Naive thymus-derived CD8-positive, alpha-beta T cell (primary cell): ENCODE measurements at regions of chr16 and their contacts with region 1.

Region 1: DNA sequence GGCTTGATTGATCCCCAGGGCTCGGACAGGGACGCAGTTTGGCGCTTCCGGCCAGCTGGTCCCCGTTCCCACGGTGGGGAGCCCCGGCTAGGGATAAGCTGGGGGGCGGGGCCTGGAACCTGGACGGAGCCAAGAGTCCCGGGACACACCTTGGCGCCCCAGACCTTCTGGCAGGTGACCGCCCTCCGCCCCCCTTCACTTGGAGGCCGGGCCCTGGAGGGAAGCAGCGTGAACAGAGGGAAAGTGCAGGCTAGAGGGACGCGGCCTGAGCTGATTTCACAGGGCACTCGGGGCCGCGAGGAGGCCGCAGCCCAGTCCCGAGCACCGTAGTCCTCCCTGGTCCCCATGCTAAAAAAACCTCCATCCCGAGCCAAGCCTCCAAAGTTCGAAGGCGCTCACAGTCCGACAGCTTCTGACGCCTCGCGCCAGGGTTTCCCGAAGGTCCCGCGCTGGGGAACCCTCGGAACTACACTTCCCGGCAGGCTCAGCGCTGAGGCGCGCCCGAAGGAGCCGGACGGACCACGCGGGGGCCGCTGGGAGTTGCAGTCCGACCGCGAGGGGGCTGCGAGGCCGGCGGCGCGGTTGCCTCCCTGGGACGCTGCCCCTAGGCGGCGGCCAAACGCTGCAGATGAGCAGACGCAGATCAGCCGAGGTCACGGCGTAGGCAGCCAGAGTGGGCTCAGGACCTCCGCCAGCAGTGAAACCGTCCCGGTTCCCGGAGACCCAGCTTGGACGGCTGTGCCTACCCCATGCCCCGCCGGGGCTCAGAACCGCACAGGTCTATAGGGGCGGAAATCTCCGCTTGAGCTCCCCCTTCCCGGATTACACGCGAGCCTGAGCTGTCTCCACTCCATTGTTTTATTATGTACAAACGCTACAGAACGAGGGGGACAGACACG is at the start of gene TBX6:
- DNase-seq: peak; percentile 86 to 93 (median 92)
- ATAC-seq: peak; percentile 77 to 81
- H3K4me3 Mint-ChIP-seq: peak within 1 kb of the TSS; percentile 80 to 93 (median 91)
- H3K27ac Mint-ChIP-seq: peak within 1 kb of the TSS; percentile 88 to 98 (median 94)
- H3K4me1 Mint-ChIP-seq: peaks cover 30 to 63% (median 57%) of the 10 kb centered on the region in 4 donors
- H3K27me3 Mint-ChIP-seq: no peaks in the 10 kb centered on the region
- polyA plus RNA-seq, gene TBX6: 0.15 to 0.25 (median 0.25) TPM

Region 2: DNA sequence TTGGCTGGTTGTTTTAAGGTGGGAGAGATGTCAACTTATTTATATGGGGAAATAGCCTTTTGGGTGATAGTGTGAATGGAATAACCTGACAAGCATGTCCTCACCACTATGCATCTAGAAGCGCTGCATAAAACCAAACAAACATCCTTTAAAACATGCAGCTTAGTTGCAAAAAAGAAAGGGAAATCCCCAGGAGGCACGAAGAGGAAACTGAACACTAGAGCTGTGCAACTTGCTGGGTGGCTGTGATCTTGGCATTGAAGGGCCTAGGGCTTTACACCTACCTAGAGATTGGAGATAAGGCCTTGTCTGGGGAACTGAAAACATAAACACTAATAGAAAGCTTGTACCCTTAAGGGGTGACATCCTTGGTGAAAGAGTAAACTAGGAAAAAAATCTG is 353.2 kb before region 1 on chr16:
- POLR2A ChIA-PET with region 1: interaction called, 10 read pairs
- DNase-seq: peak; percentile 25 to 83 (median 72)
- ATAC-seq: peak; percentile 79 to 86
- H3K4me3 Mint-ChIP-seq: peak overlapping the region; percentile 36 to 80 (median 66)
- H3K27ac Mint-ChIP-seq: peak overlapping the region; percentile 82 to 100 (median 95)
- H3K4me1 Mint-ChIP-seq: peaks cover 58 to 88% (median 85%) of the 10 kb centered on the region in 4 donors
- H3K27me3 Mint-ChIP-seq: no peaks in the 10 kb centered on the region

Region 3: GRCh38 chr16:30010844-30011713 is 80.6 kb before region 1 on chr16 and contains the start of gene DOC2A:
- POLR2A ChIA-PET with region 1: no interaction called
- DNase-seq: peak in 4 of 10 donors; percentile 27 to 38 (median 34)
- ATAC-seq: peak; percentile 77 to 78
- H3K4me3 Mint-ChIP-seq: peak within 1 kb of the TSS; percentile 73 to 91 (median 86)
- H3K27ac Mint-ChIP-seq: peak within 1 kb of the TSS in 3 of 10 donors; percentile 62 to 85 (median 67)
- H3K4me1 Mint-ChIP-seq: peaks cover 5 to 16% (median 12%) of the 10 kb centered on the region in 4 donors
- H3K27me3 Mint-ChIP-seq: peaks cover 2 to 23% (median 10%) of the 10 kb centered on the region in 5 donors
- polyA plus RNA-seq, gene DOC2A: not detected

Region 4: GRCh38 chr16:30075507-30076275 is 16.0 kb before region 1 on chr16 and contains the start of gene PPP4C:
- POLR2A ChIA-PET with region 1: interaction called, 127 read pairs
- DNase-seq: peak; percentile 83 to 93 (median 89)
- ATAC-seq: peak; percentile 86 to 96
- H3K4me3 Mint-ChIP-seq: peak within 1 kb of the TSS; percentile 90 to 98 (median 96)
- H3K27ac Mint-ChIP-seq: peak within 1 kb of the TSS; percentile 94 to 98 (median 97)
- H3K4me1 Mint-ChIP-seq: peaks cover 18 to 54% (median 39%) of the 10 kb centered on the region in 4 donors
- H3K27me3 Mint-ChIP-seq: no peaks in the 10 kb centered on the region
- polyA plus RNA-seq, gene PPP4C: 153 to 199 (median 161) TPM

Region 5: DNA sequence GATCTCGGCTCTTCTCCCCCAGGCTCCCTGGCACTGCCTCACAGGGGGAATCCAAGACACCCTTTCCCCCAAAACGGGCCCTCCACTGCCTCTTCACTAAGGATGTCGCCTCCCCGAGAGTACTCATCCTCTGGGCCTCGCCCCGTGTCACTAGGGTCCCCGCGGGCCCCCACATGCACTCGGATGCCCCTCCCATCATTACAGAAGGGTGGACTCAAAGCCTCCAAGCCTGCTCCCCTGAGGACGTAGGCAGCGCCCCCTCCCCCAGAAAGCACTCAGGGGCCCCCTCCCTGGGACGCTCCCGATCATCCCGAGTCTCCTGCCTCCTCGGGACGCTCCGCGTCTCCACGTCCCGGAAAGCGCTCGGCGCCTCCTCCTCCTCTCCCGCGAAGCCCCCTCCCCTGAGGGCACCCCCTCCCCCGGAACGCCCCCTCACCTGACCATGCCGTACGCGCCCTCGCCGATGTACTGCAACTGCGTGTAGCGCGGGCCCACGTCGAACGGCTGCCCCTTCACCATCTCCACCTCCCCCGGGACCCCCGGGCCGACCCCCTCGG is 31.0 kb after region 1 on chr16:
- POLR2A ChIA-PET with region 1: interaction called, 14 read pairs
- DNase-seq: peak in 4 of 10 donors; percentile 14 to 20 (median 17)
- ATAC-seq: peak; percentile 41
- H3K4me3 Mint-ChIP-seq: peak overlapping the region; percentile 80 to 92 (median 86)
- H3K27ac Mint-ChIP-seq: peak overlapping the region; percentile 73 to 96 (median 83)
- H3K4me1 Mint-ChIP-seq: peaks cover 12 to 33% (median 32%) of the 10 kb centered on the region in 4 donors
- H3K27me3 Mint-ChIP-seq: no peaks in the 10 kb centered on the region

Region 6: DNA sequence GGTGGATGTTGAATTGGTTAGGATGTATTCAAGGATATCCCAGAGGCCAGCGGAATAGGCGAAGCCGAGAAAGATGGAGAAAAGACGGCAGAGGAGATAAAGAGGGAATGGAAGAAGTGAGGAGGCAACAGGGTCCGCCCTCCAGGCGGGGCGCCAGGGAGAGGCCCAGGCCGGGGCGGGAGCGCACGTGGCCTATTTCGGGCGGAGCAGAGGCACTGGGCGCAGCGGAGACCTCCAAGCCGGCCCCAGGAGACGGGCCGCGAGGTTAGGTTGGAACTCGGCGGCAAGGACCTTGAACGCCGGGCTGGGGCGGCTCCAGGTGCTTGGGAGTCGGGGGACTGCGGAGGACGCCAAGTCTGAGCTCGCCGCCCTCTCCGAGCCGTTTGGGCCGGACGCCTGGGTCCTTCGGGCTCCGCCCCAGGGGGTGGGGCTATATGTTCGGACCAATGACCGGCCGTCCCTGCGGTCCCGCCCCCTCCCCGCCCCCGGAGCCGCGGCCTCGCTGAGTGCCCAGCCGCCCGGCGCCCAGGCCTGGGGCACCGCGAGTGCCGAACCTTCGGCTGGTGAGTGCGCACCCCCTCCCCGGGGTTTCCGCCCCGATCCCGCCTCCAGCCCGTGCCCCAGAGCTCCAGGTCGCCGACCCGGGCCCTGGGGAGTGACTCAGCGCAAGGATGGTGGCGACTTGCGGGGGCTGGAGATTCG is 315.5 kb after region 1 on chr16 and contains the start of gene ZNF771:
- POLR2A ChIA-PET with region 1: interaction called, 12 read pairs
- DNase-seq: peak; percentile 65 to 92 (median 80)
- ATAC-seq: peak; percentile 81 to 87
- H3K4me3 Mint-ChIP-seq: peak within 1 kb of the TSS; percentile 88 to 100 (median 97)
- H3K27ac Mint-ChIP-seq: peak within 1 kb of the TSS; percentile 82 to 96 (median 95)
- H3K4me1 Mint-ChIP-seq: peaks cover 18 to 36% (median 29%) of the 10 kb centered on the region in 4 donors
- H3K27me3 Mint-ChIP-seq: peaks cover 0 to 3% (median 0%) of the 10 kb centered on the region in 5 donors
- polyA plus RNA-seq, gene ZNF771: 2.1 to 6.7 (median 3.8) TPM